MCF 10A (cell line): ENCODE measurements at regions of chr4 and their contacts with region 1.

Region 1: DNA sequence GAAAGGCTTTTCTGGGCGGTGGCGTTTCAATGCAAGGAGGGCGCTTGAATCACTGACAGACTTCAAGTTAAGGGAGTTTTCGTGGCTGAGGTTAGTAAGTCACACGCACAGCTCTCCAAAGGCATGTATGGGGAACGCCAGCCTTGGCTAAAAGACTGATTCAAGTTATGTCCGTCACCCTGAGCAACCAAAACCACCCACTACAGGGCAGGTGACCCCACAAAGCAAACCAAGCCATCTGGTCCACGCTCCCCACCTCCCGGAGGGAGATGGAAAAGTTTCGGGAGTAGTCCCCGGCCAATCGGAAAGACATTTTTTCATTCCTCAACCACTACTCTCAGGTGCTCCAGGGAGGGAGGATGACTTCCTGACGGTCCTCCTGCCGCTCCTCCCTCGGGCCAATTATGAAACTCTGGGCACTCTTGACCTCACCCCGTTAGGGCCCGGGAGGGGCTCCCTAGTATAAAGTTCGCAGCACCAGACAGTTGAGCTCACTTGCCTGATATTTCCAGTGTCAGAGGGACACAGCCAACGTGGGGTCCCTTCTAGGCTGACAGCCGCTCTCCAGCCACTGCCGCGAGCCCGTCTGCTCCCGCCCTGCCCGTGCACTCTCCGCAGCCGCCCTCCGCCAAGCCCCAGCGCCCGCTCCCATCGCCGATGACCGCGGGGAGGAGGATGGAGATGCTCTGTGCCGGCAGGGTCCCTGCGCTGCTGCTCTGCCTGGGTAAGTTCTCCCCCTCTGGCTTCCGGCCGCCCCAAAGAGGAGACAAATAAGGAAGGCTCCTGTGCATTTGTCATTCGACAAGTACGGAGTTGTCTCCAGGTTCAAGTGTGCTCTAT is at the start of gene EREG:
- DNase-seq: peak; percentile 66
- H3K4me3 Mint-ChIP-seq: peak within 1 kb of the TSS; percentile 77
- H3K27ac Mint-ChIP-seq: peak within 1 kb of the TSS; percentile 59
- H3K4me1 Mint-ChIP-seq: peaks cover 17% of the 10 kb centered on the region
- H3K27me3 Mint-ChIP-seq: no peaks in the 10 kb centered on the region
- CTCF ChIP-seq: no peak
- total RNA-seq, gene EREG: 28.3 and 34.0 TPM in 2 replicates

Region 2: GRCh38 chr4:74189331-74190043 is 175.4 kb before region 1 on chr4:
- CTCF ChIA-PET with region 1: no interaction called
- POLR2A ChIA-PET with region 1: interaction called, 3 read pairs
- intact Hi-C with region 1: loop called (anchors 2 kb)
- DNase-seq: peak; percentile 71
- H3K4me3 Mint-ChIP-seq: no peak overlapping the region
- H3K27ac Mint-ChIP-seq: no peak overlapping the region
- H3K4me1 Mint-ChIP-seq: no peaks in the 10 kb centered on the region
- H3K27me3 Mint-ChIP-seq: no peaks in the 10 kb centered on the region
- CTCF ChIP-seq: peak; percentile 61

Region 3: DNA sequence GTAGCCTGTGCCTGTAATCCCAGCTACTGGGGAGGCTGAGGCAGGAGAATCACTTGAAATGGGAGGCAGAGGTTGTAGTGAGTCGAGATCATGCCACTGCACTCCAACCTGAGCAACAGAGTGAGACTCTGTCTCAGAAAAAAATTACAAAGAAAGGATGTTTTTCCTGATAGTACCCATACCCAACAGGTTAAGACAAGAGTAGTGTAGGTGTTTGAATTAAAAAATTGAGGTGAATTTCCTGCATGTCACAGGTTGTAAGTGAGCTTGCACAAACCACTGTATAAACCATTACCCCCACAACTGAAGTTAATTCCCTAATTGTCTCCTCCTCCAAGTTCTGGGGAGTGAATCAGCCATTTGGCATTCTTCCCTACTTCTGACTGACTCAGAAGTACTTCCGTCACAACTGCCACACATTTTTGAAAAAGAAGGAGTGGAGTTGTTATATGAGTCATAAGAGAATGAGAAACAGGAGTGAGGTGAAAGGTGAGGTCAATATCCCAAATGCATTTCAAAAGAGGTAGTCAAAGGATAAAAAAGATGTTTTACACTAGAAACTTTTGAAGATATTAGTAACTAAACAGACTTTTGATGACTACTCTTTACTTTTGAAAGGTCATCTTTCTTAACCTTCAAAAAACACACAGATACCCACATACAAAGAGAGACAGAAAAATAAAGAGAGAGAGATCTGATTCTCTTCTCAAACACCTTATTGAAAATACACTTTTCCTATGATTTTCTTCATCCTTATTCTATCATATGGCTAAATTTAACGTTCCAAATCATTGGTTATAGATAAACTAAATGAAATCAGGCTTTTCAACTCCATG is 294.9 kb after region 1 on chr4:
- CTCF ChIA-PET with region 1: no interaction called
- POLR2A ChIA-PET with region 1: no interaction called
- intact Hi-C with region 1: no loop called
- DNase-seq: peak; percentile 99
- H3K4me3 Mint-ChIP-seq: peak overlapping the region; percentile 32
- H3K27ac Mint-ChIP-seq: peak overlapping the region; percentile 98
- H3K4me1 Mint-ChIP-seq: peaks cover 40% of the 10 kb centered on the region
- H3K27me3 Mint-ChIP-seq: no peaks in the 10 kb centered on the region
- CTCF ChIP-seq: no peak

Region 4: DNA sequence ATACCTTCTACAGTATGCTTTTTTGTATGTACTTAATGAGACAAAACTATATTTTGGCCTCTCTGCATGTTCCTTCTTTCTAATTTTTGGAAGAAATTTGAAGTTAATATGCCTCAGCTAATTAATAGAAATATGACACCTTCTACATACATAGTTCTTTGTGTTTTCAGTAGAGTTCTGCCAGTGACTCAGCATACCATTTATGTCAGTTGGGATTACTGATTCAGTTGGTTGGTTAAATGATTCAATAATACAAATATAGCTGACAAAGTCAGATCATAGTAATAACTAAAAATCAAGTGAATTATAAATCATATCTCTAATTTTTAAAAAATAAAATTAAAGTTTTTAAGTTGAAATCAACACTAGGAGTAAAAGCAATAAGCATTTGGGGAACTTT is 412.7 kb after region 1 on chr4:
- CTCF ChIA-PET with region 1: no interaction called
- POLR2A ChIA-PET with region 1: no interaction called
- intact Hi-C with region 1: no loop called
- DNase-seq: no peak
- H3K4me3 Mint-ChIP-seq: no peak overlapping the region
- H3K27ac Mint-ChIP-seq: no peak overlapping the region
- H3K4me1 Mint-ChIP-seq: peaks cover 5% of the 10 kb centered on the region
- H3K27me3 Mint-ChIP-seq: no peaks in the 10 kb centered on the region
- CTCF ChIP-seq: no peak